Tibial artery (tissue), 4 donors: ENCODE measurements at regions of chrX and their contacts with region 1.

Region 1: GRCh38 chrX:17654116-17654515 is 83.2 kb upstream of the SCML1 start:
- DNase-seq: no peak
- H3K4me3 ChIP-seq: no peak overlapping the region
- H3K27ac ChIP-seq: no peak overlapping the region
- H3K4me1 ChIP-seq: peaks cover 0 to 26% (median 6%) of the 10 kb centered on the region in 4 donors
- H3K27me3 ChIP-seq: no peaks in the 10 kb centered on the region
- CTCF ChIP-seq: no peak

Region 2: DNA sequence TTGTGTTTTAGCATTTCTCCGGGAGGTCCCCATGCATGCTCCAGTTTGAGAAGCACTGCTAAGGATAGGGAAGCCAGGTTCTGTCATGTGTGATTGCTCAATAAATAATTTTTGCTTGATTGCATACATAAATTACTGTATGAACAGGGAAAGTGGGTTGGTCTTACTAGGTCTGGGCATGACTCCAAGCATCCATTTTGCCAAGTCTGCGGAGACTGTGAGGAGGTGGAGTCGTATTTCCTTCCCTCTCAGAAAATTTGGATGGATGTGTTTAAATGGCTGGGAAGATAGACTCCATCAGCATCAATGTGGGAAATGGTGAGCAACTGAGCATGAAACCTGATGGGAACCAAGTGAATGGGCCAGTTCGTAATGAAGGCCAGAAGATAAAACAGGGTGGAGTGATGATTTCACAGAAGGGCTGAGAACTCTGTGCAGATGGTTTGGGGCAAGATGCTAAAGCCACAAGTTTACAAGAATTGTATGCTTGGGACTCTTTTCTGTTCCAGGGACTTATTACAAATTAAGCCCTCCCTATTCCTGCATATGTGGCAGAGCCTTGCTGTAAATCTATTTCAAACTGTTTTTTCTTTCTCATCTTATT is 195.0 kb before region 1 on chrX:
- intact Hi-C with region 1: loop called (anchors 2 kb)
- DNase-seq: peak; percentile 44 to 71
- H3K4me3 ChIP-seq: no peak overlapping the region
- H3K27ac ChIP-seq: no peak overlapping the region
- H3K4me1 ChIP-seq: peaks cover 0 to 13% (median 0%) of the 10 kb centered on the region in 4 donors
- H3K27me3 ChIP-seq: no peaks in the 10 kb centered on the region
- CTCF ChIP-seq: no peak

Region 3: DNA sequence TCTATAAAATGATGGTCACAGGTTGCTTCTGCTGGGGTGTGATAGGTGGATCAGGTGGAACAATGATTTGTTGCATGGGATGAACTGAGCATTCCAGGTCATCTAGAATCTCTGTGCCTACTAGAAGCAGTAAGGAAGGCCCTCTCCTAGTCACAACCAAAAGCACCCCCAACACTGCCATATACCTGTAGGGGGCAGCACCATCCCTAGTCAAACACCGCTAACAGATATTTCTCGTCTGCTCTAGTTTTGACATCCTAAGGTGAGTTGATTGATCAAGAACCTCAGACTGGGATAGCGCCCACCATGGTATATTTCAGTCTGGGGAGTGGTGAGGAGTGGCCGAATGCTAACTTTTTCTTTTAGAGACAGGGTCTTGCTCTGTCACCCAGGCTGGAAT is 118.9 kb before region 1 on chrX:
- intact Hi-C with region 1: no loop called
- DNase-seq: no peak
- H3K4me3 ChIP-seq: no peak overlapping the region
- H3K27ac ChIP-seq: no peak overlapping the region
- H3K4me1 ChIP-seq: peaks cover 0 to 3% (median 0%) of the 10 kb centered on the region in 4 donors
- H3K27me3 ChIP-seq: no peaks in the 10 kb centered on the region
- CTCF ChIP-seq: peak; percentile 28 to 31

Region 4: DNA sequence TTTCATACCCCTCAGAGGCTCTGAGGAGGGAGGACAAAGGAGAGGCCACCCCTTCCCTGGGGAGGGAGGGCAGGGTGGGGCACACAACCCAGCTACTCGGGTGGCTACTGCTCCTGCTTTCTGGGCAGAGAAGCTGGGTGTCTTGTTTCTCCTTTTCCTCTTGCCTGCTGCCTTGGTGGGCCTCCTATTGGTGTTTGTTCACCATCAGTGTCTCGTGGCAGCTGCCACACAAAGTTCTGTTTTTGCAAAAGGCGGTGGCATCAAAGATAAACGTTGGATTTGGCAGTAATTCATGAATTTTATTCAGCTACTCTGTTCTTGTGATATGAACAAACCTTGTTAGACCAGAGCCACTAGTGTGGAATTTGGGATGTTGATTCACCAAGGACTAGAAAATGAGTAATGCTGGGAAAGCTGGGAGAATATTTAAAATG is 69.9 kb before region 1 on chrX:
- intact Hi-C with region 1: no loop called
- DNase-seq: no peak
- H3K4me3 ChIP-seq: no peak overlapping the region
- H3K27ac ChIP-seq: peak overlapping the region; percentile 12 to 46
- H3K4me1 ChIP-seq: peaks cover 0 to 35% (median 3%) of the 10 kb centered on the region in 4 donors
- H3K27me3 ChIP-seq: no peaks in the 10 kb centered on the region
- CTCF ChIP-seq: no peak

Region 5: GRCh38 chrX:18899796-18900447 is 1245.8 kb after region 1 on chrX:
- intact Hi-C with region 1: no loop called
- DNase-seq: no peak
- H3K4me3 ChIP-seq: no peak overlapping the region
- H3K27ac ChIP-seq: no peak overlapping the region
- H3K4me1 ChIP-seq: peaks cover 0 to 20% (median 8%) of the 10 kb centered on the region in 4 donors
- H3K27me3 ChIP-seq: no peaks in the 10 kb centered on the region
- CTCF ChIP-seq: peak in 1 of 2 experiments; percentile 19